Uterus (tissue), 4 donors: ENCODE measurements at regions of chr19 and their contacts with region 1.

Region 1: DNA sequence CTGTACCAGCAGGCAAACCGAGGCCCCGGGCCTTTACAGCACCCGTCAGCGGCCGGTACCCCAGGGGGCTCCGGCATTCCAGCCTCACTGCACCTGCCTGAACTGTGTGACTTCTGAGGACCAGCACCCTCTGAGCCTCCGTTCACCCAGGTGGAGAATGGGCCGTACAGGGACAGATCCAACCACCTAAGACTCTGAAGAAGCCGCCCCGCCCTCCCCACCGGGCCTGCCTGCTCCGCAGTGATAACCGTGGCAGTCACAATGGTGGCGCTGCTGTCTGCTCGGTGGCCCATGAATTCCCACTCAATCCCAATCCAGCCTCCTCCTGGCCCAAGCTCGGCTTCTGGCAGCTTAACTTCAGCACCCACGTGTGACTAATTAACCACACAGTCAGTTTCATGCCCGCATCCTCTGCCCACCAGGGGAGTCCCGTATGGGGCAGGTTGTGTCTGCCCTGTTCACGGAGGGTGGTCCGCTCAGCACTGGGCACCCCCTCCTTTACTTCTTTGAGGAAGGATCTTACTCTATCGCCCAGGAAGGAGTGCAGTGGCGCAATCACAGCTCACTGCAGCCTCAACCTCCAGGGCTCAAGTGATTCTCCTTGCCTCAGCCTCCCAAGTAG is 3.4 kb downstream of the TCF3 start:
- DNase-seq: no peak
- H3K4me3 ChIP-seq: no peak overlapping the region
- H3K27ac ChIP-seq: no peak overlapping the region
- H3K4me1 ChIP-seq: peaks cover 0 to 16% of the 10 kb centered on the region in 2 donors
- H3K27me3 ChIP-seq: no peaks in the 10 kb centered on the region
- CTCF ChIP-seq: no peak
- POLR2A ChIP-seq: no peak

Region 2: DNA sequence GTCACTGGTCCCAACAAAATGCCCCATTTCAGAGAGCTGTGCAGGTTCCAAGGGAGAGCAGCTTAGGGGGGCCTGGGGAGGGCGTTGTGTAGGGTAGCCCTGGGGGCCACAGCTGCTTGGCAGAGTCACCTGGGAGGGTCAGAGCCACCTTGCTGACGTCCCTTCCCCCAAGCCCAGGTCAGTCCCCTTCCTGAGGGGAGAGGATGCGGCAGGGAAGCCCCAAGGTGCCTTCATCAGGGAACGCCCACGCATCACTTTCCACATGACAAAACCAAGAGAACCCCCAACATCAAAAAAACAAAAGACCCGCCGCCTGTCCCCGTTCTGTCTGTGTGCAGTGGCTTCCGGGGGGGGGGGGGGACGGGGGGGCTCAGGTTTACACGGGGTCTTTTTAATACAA is 38.5 kb before region 1 on chr19:
- intact Hi-C with region 1: loop called (anchors 5 kb)
- DNase-seq: no peak
- H3K4me3 ChIP-seq: no peak overlapping the region
- H3K27ac ChIP-seq: no peak overlapping the region
- H3K4me1 ChIP-seq: no peaks in the 10 kb centered on the region
- H3K27me3 ChIP-seq: no peaks in the 10 kb centered on the region
- CTCF ChIP-seq: no peak
- POLR2A ChIP-seq: no peak

Region 3: DNA sequence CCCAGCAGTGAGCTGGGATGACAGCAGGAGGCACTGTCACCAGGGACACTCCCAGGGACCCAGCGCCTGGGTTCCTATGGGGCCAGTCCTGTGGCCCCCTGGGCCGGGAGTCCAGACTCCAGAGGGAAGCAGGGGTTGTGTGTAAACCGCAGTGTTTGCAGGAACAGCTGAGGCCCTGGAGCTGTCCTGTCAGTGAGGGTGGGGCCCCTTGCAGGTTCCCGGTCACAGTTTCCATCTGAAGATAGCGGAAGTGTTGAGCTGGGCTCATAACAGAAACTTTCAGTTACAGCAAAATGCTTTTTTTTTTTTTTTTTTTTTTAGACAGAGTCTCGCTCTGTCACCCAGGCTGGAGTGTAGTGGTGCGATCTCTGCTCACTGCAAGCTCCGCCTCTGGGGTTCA is 274.3 kb after region 1 on chr19:
- intact Hi-C with region 1: no loop called
- DNase-seq: no peak
- H3K4me3 ChIP-seq: no peak overlapping the region
- H3K27ac ChIP-seq: no peak overlapping the region
- H3K4me1 ChIP-seq: no peaks in the 10 kb centered on the region
- H3K27me3 ChIP-seq: no peaks in the 10 kb centered on the region
- CTCF ChIP-seq: no peak
- POLR2A ChIP-seq: no peak